Activated CD8-positive, alpha-beta T cell treated with anti-CD3 and anti-CD28 coated beads, Interleukin-2, amount 10 ng/mL, durations not matched to agents 7 days and 5 days (primary cell): ENCODE measurements at regions of chr1 and their contacts with region 1.

Region 1: DNA sequence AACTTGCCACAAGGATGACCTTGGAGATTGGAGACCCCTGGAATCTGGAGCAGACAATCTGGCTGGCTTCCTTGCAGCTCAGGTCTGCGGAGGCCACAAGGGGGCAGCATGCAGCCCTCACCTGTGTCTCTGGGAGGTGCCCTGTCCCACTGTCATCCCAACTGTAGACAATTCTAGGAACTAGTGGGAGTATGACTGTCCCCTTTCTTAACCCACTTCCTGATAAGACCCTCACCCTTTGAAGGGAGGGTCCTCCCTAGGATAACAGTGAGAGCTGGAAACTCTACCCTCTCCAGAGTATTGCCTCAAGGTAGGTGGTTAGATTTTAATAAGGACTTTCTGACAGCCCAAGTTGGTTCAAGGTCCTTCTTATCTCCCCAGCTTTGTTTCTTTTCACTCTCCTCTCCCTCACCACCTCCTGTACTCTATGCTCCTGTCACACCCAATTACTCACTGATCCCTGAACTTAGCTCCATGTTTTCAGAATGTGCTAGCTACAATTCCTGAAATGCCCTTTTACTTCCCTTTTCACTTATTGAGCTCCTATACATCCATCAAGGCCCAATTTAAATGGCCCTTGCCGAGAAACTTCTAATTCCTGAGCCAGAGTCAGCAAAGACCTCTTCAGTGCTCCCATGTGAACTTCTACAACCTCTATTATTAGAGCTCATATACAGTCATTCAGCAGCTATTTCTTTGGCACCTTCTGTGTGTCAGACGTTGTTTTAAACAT is 9.2 kb upstream of the KCNQ4 start:
- DNase-seq: peak; percentile 76
- ATAC-seq: peak; percentile 72
- H3K4me3 Mint-ChIP-seq: no peak overlapping the region
- H3K27ac Mint-ChIP-seq: peak overlapping the region; percentile 11
- H3K4me1 Mint-ChIP-seq: peaks cover 26% of the 10 kb centered on the region
- H3K27me3 Mint-ChIP-seq: no peaks in the 10 kb centered on the region

Region 2: GRCh38 chr1:40691538-40692428 is 82.6 kb before region 1 on chr1 and contains the start of gene NFYC:
- CTCF ChIA-PET with region 1: interaction called, 27 read pairs
- POLR2A ChIA-PET with region 1: interaction called, 9 read pairs
- DNase-seq: peak; percentile 98
- ATAC-seq: peak; percentile 89
- H3K4me3 Mint-ChIP-seq: peak within 1 kb of the TSS; percentile 87
- H3K27ac Mint-ChIP-seq: peak within 1 kb of the TSS; percentile 93
- H3K4me1 Mint-ChIP-seq: peaks cover 52% of the 10 kb centered on the region
- H3K27me3 Mint-ChIP-seq: no peaks in the 10 kb centered on the region
- total RNA-seq, gene NFYC: 71.5 to 74.4 TPM

Region 3: GRCh38 chr1:40732756-40733301 is 41.6 kb before region 1 on chr1:
- CTCF ChIA-PET with region 1: interaction called, 11 read pairs
- POLR2A ChIA-PET with region 1: no interaction called
- DNase-seq: no peak
- ATAC-seq: no peak
- H3K4me3 Mint-ChIP-seq: no peak overlapping the region
- H3K27ac Mint-ChIP-seq: peak overlapping the region; percentile 32
- H3K4me1 Mint-ChIP-seq: peaks cover 26% of the 10 kb centered on the region
- H3K27me3 Mint-ChIP-seq: no peaks in the 10 kb centered on the region

Region 4: GRCh38 chr1:40786171-40786994 is 12.0 kb after region 1 on chr1:
- CTCF ChIA-PET with region 1: interaction called, 28 read pairs
- POLR2A ChIA-PET with region 1: no interaction called
- DNase-seq: no peak
- ATAC-seq: no peak
- H3K4me3 Mint-ChIP-seq: no peak overlapping the region
- H3K27ac Mint-ChIP-seq: no peak overlapping the region
- H3K4me1 Mint-ChIP-seq: peaks cover 21% of the 10 kb centered on the region
- H3K27me3 Mint-ChIP-seq: peaks cover 27% of the 10 kb centered on the region

Region 5: GRCh38 chr1:40825996-40826395 is 51.6 kb after region 1 on chr1:
- CTCF ChIA-PET with region 1: interaction called, 19 read pairs
- POLR2A ChIA-PET with region 1: no interaction called
- DNase-seq: no peak
- ATAC-seq: peak; percentile 29
- H3K4me3 Mint-ChIP-seq: peak overlapping the region; percentile 36
- H3K27ac Mint-ChIP-seq: peak overlapping the region; percentile 74
- H3K4me1 Mint-ChIP-seq: peaks cover 33% of the 10 kb centered on the region
- H3K27me3 Mint-ChIP-seq: no peaks in the 10 kb centered on the region

Region 6: DNA sequence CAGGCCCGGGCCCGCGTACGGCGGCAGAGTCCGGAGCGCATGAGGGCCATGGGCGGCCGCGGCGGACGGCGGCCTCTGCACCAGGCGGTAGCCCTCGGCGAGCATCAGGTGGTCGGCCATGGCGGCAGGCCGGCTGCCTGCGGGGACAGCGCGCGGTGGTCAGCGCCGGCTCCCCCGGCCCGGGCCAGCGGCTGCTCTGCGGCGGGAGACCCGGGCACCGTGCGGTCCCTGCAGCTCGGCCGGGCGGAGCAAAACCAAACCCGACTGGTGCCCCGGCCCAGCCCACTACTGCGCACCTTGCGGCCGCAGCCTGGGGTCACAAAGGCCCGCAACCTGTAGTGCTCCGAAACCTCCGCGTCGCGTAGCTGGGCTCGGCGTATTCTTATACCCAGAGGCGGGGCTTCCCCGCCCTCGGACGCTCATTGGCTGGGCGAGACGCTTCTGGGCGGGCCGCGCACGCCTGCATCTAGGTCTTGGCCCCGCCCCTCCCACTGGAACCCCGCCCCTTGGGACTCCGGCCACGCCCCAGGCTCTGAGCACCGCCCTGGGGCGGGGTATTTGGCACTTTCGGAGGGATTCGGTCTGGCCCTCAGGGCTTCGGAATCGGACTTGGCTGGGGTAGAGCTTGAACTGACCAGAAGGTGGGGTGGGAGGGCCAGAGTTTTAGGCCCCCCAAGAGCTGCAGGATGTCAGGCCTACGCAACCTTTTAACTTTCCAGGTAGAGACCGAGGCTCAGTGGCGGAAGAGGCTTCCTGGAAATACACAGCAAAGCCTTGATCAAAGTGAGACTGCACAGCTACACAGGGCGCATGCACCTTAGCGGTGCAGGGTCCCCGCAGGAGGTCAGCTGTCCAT is 87.8 kb after region 1 on chr1 and contains the start of gene CITED4:
- CTCF ChIA-PET with region 1: interaction called, 11 read pairs
- POLR2A ChIA-PET with region 1: interaction called, 3 read pairs
- DNase-seq: peak; percentile 97
- ATAC-seq: peak; percentile 93
- H3K4me3 Mint-ChIP-seq: peak within 1 kb of the TSS; percentile 79
- H3K27ac Mint-ChIP-seq: peak within 1 kb of the TSS; percentile 96
- H3K4me1 Mint-ChIP-seq: peaks cover 30% of the 10 kb centered on the region
- H3K27me3 Mint-ChIP-seq: peaks cover 21% of the 10 kb centered on the region
- total RNA-seq, gene CITED4: 9.1 to 10.0 TPM